T-cell (primary cell): ENCODE measurements at regions of chr21 and their contacts with region 1.

Region 1: DNA sequence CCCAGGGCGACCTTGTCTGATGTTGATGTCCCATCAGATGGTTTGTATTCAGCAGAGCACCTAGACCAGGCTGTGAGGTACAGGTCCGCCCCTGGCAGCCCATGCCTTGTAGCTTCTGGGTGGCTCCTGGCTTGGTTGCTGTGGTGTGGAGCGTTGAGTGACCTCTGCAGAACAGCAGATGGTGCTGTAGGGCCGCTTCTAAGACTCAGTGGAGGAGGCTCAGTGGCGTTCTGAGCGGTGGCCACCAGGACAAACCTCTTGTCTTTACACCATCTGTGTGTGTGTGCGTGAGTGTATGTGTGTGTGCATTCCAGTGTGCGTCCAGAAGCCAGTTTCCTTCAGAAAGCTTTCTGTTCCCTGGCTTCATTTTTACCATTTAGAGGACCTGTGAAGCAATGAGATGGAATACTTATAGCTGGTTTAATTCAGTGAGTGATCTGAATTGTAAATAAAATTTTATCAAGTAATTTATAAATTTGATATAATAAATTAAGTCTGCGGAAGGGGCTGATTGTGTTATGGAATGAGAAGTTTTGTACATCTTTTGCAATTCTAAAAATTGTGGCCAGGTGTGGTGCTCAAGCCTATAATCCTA is 66.1 kb downstream of the ADARB1 start:
- DNase-seq: peak in 33 of 35 experiments; percentile 29 to 75 (median 53)
- ATAC-seq: peak; percentile 71 to 88 (median 78)
- H3K4me3 ChIP-seq: no peak overlapping the region
- H3K4me3 Mint-ChIP-seq: no peak overlapping the region
- H3K27ac ChIP-seq: no peak overlapping the region
- H3K27ac Mint-ChIP-seq: no peak overlapping the region
- H3K4me1 ChIP-seq: peaks cover 0 to 5% of the 10 kb centered on the region in 2 experiments
- H3K4me1 Mint-ChIP-seq: peaks cover 11 to 23% (median 18%) of the 10 kb centered on the region in 3 donors
- H3K27me3 ChIP-seq: no peaks in the 10 kb centered on the region
- H3K27me3 Mint-ChIP-seq: no peaks in the 10 kb centered on the region

Region 2: DNA sequence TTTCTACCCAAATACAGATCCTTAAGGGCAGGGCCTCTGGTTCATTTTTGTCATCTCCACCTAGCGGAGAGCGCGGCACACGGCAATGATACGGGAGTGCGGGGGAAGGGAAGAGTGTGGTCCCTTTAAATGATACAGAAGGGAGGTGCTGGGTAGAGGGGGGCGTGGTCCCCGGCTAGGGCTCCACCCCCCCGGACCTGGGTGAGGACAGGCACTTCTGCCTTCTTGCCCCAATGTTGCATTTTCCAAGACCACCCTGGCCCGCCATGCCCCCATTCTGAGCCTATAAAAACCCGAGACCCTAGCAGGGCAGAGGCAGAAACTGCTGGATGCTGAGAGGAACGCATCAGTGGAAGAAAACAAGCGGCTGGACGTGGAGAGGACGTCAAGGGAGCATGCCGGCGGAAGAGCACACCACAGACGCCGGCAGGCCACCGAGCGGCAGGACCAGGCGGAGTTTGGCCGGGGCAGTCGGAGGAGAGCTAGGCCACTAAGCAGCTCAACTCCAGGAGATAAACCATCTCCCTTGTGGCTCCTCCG is 655.1 kb before region 1 on chr21:
- CTCF ChIA-PET with region 1: no interaction called
- POLR2A ChIA-PET with region 1: no interaction called
- DNase-seq: peak in 27 of 35 experiments; percentile 2 to 57 (median 32)
- ATAC-seq: peak; percentile 79 to 91 (median 83)
- H3K4me3 ChIP-seq: peak overlapping the region in 1 of 2 donors; percentile 27
- H3K4me3 Mint-ChIP-seq: peak overlapping the region; percentile 43 to 78 (median 77)
- H3K27ac ChIP-seq: no peak overlapping the region
- H3K27ac Mint-ChIP-seq: peak overlapping the region in 1 of 2 donors; percentile 28
- H3K4me1 ChIP-seq: peaks cover 11 to 13% of the 10 kb centered on the region in 2 experiments
- H3K4me1 Mint-ChIP-seq: peaks cover 6 to 10% (median 8%) of the 10 kb centered on the region in 3 donors
- H3K27me3 ChIP-seq: peaks cover 0 to 22% of the 10 kb centered on the region in 2 experiments
- H3K27me3 Mint-ChIP-seq: peaks cover 7 to 8% of the 10 kb centered on the region in 2 donors

Region 3: GRCh38 chr21:45114072-45114471 is 26.4 kb before region 1 on chr21:
- CTCF ChIA-PET with region 1: no interaction called
- POLR2A ChIA-PET with region 1: no interaction called
- DNase-seq: no peak
- ATAC-seq: no peak
- H3K4me3 ChIP-seq: no peak overlapping the region
- H3K4me3 Mint-ChIP-seq: no peak overlapping the region
- H3K27ac ChIP-seq: no peak overlapping the region
- H3K27ac Mint-ChIP-seq: no peak overlapping the region
- H3K4me1 ChIP-seq: peaks cover 15 to 17% of the 10 kb centered on the region in 2 experiments
- H3K4me1 Mint-ChIP-seq: peaks cover 48 to 74% (median 64%) of the 10 kb centered on the region in 3 donors
- H3K27me3 ChIP-seq: no peaks in the 10 kb centered on the region
- H3K27me3 Mint-ChIP-seq: no peaks in the 10 kb centered on the region

Region 4: DNA sequence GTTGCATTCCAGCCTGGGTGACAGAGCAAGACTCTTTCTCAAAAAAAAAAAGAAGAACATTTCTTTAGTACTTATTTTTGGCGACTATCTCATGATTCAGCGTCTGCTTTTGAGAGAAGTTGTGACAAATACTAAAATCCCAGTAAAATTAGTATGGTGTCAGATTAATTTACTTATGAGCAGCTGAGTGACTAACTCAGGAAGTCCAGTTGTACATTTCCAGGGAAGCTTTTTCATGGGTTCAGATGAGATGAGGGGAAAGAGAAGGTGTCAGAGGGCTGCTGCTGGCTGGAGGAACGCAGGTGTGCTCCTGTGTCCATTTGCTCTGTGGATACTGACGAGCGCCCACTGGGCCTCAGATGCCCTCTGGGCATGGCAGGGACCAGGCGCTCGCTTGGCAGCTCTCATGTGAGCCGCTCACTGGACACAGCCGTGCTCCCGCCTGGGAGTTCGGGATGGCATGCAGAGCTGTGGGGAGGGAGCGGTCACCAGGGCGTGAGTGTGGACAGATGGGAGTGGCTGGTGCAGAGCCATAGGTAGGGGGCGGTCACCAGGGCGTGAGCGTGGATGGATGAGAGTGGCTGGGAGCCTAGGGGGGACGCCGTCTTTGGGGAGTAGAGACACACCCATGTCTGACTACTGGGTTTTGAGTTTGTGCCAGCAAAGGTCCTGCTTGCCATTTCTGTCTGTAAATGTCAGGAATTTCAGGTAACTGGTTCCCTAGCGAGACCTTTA is 11.1 kb before region 1 on chr21:
- CTCF ChIA-PET with region 1: interaction called, 15 to 24 read pairs
- POLR2A ChIA-PET with region 1: no interaction called
- DNase-seq: no peak
- ATAC-seq: no peak
- H3K4me3 ChIP-seq: no peak overlapping the region
- H3K4me3 Mint-ChIP-seq: no peak overlapping the region
- H3K27ac ChIP-seq: no peak overlapping the region
- H3K27ac Mint-ChIP-seq: no peak overlapping the region
- H3K4me1 ChIP-seq: peaks cover 2 to 4% of the 10 kb centered on the region in 2 experiments
- H3K4me1 Mint-ChIP-seq: peaks cover 29 to 43% (median 37%) of the 10 kb centered on the region in 3 donors
- H3K27me3 ChIP-seq: no peaks in the 10 kb centered on the region
- H3K27me3 Mint-ChIP-seq: no peaks in the 10 kb centered on the region